ENCODE measurements at regions of chr5 and their contacts with region 1.

Region 1: DNA sequence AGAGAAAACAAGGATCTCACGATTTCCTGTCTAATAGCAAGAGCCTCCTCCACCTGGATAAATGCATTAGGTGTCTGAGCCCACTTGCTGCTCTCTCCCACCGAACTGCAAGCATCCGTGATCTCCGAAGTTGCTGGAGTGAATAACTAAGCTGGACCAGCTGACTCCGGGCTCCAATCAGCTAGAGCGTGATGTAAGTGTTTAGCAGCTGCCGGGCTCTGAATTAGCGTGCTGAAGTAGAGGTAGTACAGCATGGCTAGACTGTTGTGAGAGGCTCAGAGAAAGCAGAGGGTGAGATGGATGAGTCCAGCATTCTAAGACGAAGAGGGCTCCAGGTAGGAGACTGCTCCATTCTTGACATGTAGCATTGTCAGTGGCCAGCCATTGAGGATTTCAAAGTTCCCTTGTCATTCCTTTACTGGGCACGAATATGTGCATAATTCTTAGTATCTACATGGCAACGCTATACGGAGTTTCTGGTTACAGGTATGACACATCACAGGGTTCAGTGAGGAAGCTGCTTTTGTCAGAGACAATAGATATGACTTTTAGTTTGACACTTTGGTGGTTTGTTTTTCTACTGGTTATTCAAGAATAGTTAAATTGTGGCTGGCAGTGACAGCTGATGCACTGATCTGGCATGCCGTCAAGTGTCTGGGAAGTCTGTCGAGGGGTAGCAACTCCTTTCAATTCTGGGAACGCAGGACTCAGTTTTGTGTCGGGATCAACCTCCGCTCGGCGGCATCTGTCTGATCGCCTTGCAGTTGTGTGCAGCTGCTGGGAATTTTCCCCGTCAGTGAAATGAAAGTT is 232.6 kb downstream of the MAST4 start:
- DNase-seq: no peak
- ATAC-seq: peak; percentile 57; the same call in 2 of the 3 replicates
- H3K4me3 ChIP-seq: no peak overlapping the region
- H3K27ac ChIP-seq: no peak overlapping the region
- H3K4me1 ChIP-seq: no peaks in the 10 kb centered on the region
- H3K27me3 ChIP-seq: peaks cover 0 to 17% of the 10 kb centered on the region in 2 experiments; a peak in 2 of 5 replicates
- CTCF ChIP-seq: no peak
- EP300 ChIP-seq: no peak
- POLR2A ChIP-seq: no peak
- RAD21 ChIP-seq: no peak

Region 2: GRCh38 chr5:66680739-66681138 is 148.0 kb before region 1 on chr5:
- CTCF ChIA-PET with region 1: no interaction called
- POLR2A ChIA-PET with region 1: no interaction called
- in situ Hi-C with region 1: no loop called
- intact Hi-C with region 1: no loop called
- DNase-seq: no peak
- ATAC-seq: 0 out of 3 replicates have a peak, but pooled peaks have one; percentile 54
- H3K4me3 ChIP-seq: no peak overlapping the region
- H3K27ac ChIP-seq: no peak overlapping the region
- H3K4me1 ChIP-seq: no peaks in the 10 kb centered on the region
- H3K27me3 ChIP-seq: no peaks in the 10 kb centered on the region; a peak in 1 of 5 replicates
- CTCF ChIP-seq: 0 out of 6 replicates have a peak, but pooled peaks of 1 of the 3 experiments have one; percentile 34
- EP300 ChIP-seq: no peak
- POLR2A ChIP-seq: no peak
- RAD21 ChIP-seq: no peak

Region 3: DNA sequence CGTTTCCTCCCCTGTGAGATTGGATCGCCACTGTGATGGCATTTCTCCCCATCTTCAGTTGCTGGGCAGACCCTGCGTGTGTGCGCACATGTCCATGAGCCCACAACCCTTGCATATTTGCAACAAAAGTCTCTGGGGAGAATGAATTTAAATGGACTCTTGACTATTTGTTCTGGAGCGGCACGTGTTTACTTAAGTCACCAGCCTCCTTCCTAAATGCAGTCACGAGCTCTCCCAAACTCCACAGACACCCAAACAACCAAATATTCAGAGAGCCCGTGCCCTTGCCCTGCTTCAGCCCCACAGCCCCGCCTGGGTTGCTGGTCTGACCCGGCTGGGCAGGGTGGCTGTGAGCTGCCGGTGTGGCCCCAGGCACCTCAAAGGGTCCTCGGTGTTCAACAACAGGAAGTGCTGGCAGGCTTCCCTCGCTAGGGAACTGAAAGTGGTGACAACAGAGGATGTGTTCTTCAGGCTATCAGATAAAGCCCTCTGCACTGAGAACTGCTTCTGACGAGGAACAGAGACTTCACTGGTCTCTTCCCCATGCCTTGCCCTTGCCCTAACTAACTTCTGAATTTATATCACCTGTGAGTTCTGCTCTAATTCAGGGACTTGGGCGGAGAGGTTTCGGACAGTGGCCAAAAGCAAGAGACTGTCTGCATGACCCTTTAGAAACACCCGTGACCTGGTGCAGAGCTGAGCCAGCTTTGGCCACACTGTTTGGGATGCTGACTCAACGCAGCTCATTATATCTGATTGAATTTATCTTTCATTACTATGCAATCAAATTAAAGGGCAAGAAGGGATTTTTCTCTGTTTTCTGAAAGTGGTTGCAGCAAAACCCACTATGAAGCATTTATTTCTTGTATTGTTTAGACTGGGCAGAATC is 387.1 kb after region 1 on chr5:
- CTCF ChIA-PET with region 1: no interaction called
- POLR2A ChIA-PET with region 1: no interaction called
- in situ Hi-C with region 1: loop called (anchors 10 kb)
- intact Hi-C with region 1: no loop called
- DNase-seq: peak in 1 of 4 experiments; percentile 25
- ATAC-seq: peak; percentile 88
- H3K4me3 ChIP-seq: no peak overlapping the region
- H3K27ac ChIP-seq: no peak overlapping the region
- H3K4me1 ChIP-seq: peaks cover 0 to 6% of the 10 kb centered on the region in 2 experiments; a peak in 1 of 5 replicates
- H3K27me3 ChIP-seq: peaks cover 10 to 28% of the 10 kb centered on the region in 2 experiments
- CTCF ChIP-seq: no peak
- EP300 ChIP-seq: no peak
- POLR2A ChIP-seq: no peak
- RAD21 ChIP-seq: no peak

Measured in K562 (cell line).